ENCODE measurements at regions of chr4 and their contacts with region 1.

Region 1: GRCh38 chr4:20544645-20545044 is 155.6 kb upstream of the PACRGL start:
- DNase-seq: peak; percentile 38
- ATAC-seq: peak; percentile 29; the same call in 1 of the 2 replicates
- H3K4me3 ChIP-seq: no peak overlapping the region
- H3K27ac ChIP-seq: no peak overlapping the region
- H3K4me1 ChIP-seq: no peaks in the 10 kb centered on the region
- H3K27me3 ChIP-seq: no peaks in the 10 kb centered on the region
- CTCF ChIP-seq: peak; percentile 64

Region 2: GRCh38 chr4:20305976-20306375 is 238.7 kb before region 1 on chr4:
- CTCF ChIA-PET with region 1: no interaction called
- POLR2A ChIA-PET with region 1: no interaction called
- intact Hi-C with region 1: loop called (anchors 10 kb)
- DNase-seq: peak; percentile 36
- ATAC-seq: no peak
- H3K4me3 ChIP-seq: no peak overlapping the region
- H3K27ac ChIP-seq: no peak overlapping the region
- H3K4me1 ChIP-seq: no peaks in the 10 kb centered on the region
- H3K27me3 ChIP-seq: no peaks in the 10 kb centered on the region
- CTCF ChIP-seq: peak; percentile 49

Region 3: DNA sequence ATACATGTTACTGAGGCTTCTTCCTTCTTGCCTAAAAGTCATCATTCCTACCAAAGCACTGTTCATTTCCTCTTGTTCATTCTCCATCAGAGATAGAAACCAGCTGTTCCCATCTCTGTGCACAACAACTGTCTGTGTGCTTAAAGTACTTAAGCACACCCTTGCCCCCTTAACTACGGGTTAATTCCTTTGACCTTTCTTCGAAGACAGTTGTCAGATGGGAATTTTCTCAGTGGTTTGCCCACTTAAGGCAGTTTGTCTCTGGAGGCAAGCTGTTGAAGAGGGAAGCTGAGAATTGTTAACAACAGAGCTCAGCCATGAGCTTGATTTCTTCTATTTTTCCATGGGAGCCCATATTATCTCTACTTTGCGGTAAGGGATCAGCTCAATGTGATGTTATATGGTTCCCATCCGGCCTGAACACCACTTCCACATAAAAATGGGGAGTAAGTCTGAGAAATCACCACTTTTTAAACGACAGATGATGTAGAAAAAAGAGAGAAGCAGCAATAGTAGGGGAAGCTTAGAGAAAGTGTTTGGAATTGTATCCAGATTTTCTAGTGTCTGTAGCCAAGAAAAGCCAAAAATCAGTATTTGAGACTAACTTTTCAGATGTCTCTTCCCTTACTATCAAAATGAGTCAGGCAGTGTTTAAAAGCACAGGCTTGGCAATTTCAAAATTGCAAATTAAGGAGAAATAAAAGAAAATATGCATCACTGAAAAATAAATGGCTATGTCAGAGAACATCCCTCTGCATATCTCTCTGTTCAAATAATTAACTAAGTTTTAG is 98.5 kb before region 1 on chr4:
- CTCF ChIA-PET with region 1: no interaction called
- POLR2A ChIA-PET with region 1: no interaction called
- intact Hi-C with region 1: no loop called
- DNase-seq: no peak
- ATAC-seq: no peak
- H3K4me3 ChIP-seq: no peak overlapping the region
- H3K27ac ChIP-seq: no peak overlapping the region
- H3K4me1 ChIP-seq: 0 out of 2 replicates have a peak, but pooled peaks cover 4% of the 10 kb centered on the region
- H3K27me3 ChIP-seq: no peaks in the 10 kb centered on the region
- CTCF ChIP-seq: no peak

Region 4: DNA sequence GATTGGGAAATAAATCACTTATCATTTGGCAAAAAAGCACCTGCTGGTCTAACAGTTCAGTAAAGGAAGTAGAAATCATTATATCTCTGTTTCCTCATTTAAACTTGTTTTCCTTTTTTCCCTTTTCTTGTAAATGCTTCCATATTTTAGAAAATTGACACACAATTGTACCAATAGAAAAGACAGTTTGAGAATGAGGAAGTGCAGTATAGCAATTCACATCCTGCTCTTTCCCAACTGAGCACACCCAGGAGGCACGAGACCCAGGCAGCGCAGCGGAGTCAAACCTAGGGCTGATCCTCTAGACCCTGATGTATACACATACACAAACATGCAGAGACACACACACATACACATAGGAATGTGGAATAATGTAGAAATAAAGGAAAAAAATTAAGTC is 80.8 kb after region 1 on chr4:
- CTCF ChIA-PET with region 1: no interaction called
- POLR2A ChIA-PET with region 1: no interaction called
- intact Hi-C with region 1: no loop called
- DNase-seq: no peak
- ATAC-seq: no peak
- H3K4me3 ChIP-seq: no peak overlapping the region
- H3K27ac ChIP-seq: no peak overlapping the region
- H3K4me1 ChIP-seq: no peaks in the 10 kb centered on the region
- H3K27me3 ChIP-seq: no peaks in the 10 kb centered on the region
- CTCF ChIP-seq: no peak

Region 5: DNA sequence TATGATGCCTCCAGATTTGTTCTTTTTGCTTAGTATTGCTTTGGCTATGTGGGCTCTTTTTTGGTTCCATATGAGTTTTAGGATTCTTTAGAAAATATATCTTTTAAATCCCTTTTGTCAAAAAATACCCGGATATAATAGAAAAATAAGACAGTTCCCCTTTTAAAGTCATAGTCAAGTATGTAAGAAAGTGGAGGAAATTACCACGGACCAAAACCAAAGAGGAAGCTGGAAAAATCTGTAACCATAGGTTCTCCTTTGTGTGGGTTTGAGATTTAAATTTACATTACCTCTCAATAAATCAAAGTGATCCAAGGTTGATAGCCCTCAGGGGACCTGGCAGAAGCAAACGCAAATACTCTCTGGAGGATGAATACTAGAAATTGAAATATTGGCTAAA is 97.3 kb after region 1 on chr4:
- CTCF ChIA-PET with region 1: no interaction called
- POLR2A ChIA-PET with region 1: no interaction called
- intact Hi-C with region 1: no loop called
- DNase-seq: no peak
- ATAC-seq: no peak
- H3K4me3 ChIP-seq: no peak overlapping the region
- H3K27ac ChIP-seq: no peak overlapping the region
- H3K4me1 ChIP-seq: no peaks in the 10 kb centered on the region; the same call in 1 of the 2 replicates
- H3K27me3 ChIP-seq: no peaks in the 10 kb centered on the region
- CTCF ChIP-seq: no peak